ENCODE measurements at regions of chr19 and their contacts with region 1.

Region 1: DNA sequence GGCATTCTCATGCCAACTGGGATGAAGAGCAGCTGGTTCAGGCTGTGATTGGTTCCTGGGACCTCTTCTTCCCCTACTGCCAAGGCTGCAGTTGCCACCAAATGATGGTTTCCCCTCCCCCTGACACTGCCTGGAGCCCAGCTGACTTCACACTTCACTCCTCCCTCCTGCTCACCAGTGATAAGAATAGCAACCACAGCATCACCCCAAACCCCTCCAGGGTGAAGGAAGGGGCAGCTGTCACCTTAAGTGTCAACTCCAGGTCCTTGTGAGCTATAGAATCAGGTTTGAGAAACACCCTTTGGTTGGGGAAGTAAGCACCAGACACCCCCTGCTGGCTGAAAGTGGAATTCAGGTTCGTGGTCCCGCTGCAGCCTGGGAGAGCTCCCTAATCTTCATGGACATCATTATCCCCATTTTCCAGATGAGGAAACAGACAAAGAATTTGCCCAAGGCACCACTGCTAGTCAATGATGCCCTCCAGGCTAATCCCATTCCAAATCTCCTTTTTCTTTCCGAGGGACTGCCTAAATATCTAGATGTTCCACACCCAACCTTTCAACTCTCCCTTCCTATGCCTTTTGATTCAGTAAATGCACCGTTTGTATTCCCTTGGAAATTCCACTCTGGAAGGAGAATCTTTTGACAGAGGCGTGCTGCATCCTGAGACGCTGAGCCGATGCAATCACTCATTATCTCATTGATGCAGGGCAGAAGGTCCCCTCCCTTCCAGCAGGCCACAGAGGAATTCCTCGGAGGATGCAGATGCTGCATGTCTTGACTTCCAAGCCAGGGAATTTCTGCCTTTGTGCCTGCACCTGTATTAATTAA is 50.6 kb upstream of the UQCRFS1 start:
- DNase-seq: peak; percentile 11
- ATAC-seq: peak; percentile 69
- H3K4me3 ChIP-seq: no peak overlapping the region
- H3K27ac ChIP-seq: no peak overlapping the region
- H3K4me1 ChIP-seq: no peaks in the 10 kb centered on the region
- H3K27me3 ChIP-seq: no peaks in the 10 kb centered on the region; a peak in 1 of 5 replicates
- CTCF ChIP-seq: peak; percentile 74
- EP300 ChIP-seq: no peak
- POLR2A ChIP-seq: no peak
- RAD21 ChIP-seq: no peak

Region 2: GRCh38 chr19:28737021-28737895 is 526.3 kb before region 1 on chr19:
- CTCF ChIA-PET with region 1: no interaction called
- POLR2A ChIA-PET with region 1: no interaction called
- in situ Hi-C with region 1: loop called (anchors 10 kb)
- intact Hi-C with region 1: no loop called
- DNase-seq: peak; percentile 15
- ATAC-seq: peak; percentile 69
- H3K4me3 ChIP-seq: no peak overlapping the region; a peak in 2 of 6 replicates
- H3K27ac ChIP-seq: no peak overlapping the region
- H3K4me1 ChIP-seq: no peaks in the 10 kb centered on the region
- H3K27me3 ChIP-seq: no peaks in the 10 kb centered on the region
- CTCF ChIP-seq: peak; percentile 37
- EP300 ChIP-seq: no peak
- POLR2A ChIP-seq: no peak
- RAD21 ChIP-seq: no peak

Region 3: DNA sequence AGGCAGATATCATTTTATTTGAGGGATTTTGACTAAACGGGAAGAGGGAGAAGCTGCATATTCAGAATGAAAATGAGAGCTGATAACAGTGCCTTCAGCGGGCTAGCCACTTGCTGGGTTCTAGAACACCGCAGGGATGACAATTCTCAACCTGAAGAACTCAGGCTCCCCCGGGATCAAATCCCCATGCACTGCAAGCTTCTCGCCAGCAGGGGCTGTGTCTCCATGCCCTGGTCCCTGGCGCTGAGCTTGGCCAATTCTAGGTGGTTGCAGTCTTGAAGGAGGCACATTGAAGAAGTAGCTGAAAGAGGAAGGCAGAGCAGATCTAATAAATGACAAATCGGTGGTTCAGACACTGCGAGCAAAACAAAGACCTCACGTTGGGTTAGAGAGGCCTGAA is 179.3 kb before region 1 on chr19:
- CTCF ChIA-PET with region 1: no interaction called
- POLR2A ChIA-PET with region 1: no interaction called
- in situ Hi-C with region 1: no loop called
- intact Hi-C with region 1: loop called (anchors 2 kb)
- DNase-seq: no peak
- ATAC-seq: peak; percentile 78
- H3K4me3 ChIP-seq: no peak overlapping the region
- H3K27ac ChIP-seq: no peak overlapping the region
- H3K4me1 ChIP-seq: 0 out of 2 replicates have a peak, but pooled peaks cover 7% of the 10 kb centered on the region
- H3K27me3 ChIP-seq: no peaks in the 10 kb centered on the region
- CTCF ChIP-seq: peak; percentile 43
- EP300 ChIP-seq: no peak
- POLR2A ChIP-seq: no peak
- RAD21 ChIP-seq: no peak

Region 4: DNA sequence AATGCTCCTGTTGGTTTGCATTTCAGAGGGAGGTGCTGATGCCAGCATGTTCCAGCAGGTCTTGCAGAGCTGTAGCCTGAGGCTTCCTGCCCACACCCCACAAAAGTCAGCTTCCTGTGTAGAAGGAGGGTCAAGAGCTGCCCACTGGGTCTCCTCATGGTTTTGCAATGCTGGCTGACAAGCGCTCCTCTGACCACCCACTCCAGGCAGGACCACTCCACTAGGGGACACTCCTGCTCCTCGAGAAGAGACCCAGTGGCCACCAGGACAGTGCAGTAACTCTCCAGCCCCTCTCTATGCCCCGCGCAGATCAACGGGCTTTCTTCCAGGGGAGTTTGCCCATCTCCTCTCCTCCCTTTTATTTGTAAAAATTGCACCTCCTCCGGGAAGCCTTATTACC is 22.4 kb after region 1 on chr19:
- CTCF ChIA-PET with region 1: no interaction called
- POLR2A ChIA-PET with region 1: no interaction called
- in situ Hi-C with region 1: no loop called
- intact Hi-C with region 1: no loop called
- DNase-seq: no peak
- ATAC-seq: peak; percentile 70
- H3K4me3 ChIP-seq: no peak overlapping the region
- H3K27ac ChIP-seq: no peak overlapping the region
- H3K4me1 ChIP-seq: no peaks in the 10 kb centered on the region
- H3K27me3 ChIP-seq: no peaks in the 10 kb centered on the region; a peak in 1 of 5 replicates
- CTCF ChIP-seq: 0 out of 2 replicates have a peak, but pooled peaks have one; percentile 25
- EP300 ChIP-seq: no peak
- POLR2A ChIP-seq: no peak
- RAD21 ChIP-seq: no peak

Measured in HepG2 (cell line).